A549 (cell line): ENCODE measurements at regions of chr9 and their contacts with region 1.

Region 1: GRCh38 chr9:33076358-33077004 is at the start of gene SMU1:
- DNase-seq: peak; percentile 96 to 99
- ATAC-seq: peak; percentile 97 to 99
- H3K4me3 ChIP-seq: peak within 1 kb of the TSS; percentile 71
- H3K27ac ChIP-seq: peak within 1 kb of the TSS; percentile 82 to 93
- H3K4me1 ChIP-seq: peaks cover 14% of the 10 kb centered on the region; the same call in 2 of the 3 replicates
- CTCF ChIP-seq: no peak
- EP300 ChIP-seq: no peak
- POLR2A ChIP-seq: peak; percentile 70
- RAD21 ChIP-seq: no peak
- polyA plus RNA-seq, gene SMU1: 25.3 and 26.0 TPM in 2 replicates

Region 2: DNA sequence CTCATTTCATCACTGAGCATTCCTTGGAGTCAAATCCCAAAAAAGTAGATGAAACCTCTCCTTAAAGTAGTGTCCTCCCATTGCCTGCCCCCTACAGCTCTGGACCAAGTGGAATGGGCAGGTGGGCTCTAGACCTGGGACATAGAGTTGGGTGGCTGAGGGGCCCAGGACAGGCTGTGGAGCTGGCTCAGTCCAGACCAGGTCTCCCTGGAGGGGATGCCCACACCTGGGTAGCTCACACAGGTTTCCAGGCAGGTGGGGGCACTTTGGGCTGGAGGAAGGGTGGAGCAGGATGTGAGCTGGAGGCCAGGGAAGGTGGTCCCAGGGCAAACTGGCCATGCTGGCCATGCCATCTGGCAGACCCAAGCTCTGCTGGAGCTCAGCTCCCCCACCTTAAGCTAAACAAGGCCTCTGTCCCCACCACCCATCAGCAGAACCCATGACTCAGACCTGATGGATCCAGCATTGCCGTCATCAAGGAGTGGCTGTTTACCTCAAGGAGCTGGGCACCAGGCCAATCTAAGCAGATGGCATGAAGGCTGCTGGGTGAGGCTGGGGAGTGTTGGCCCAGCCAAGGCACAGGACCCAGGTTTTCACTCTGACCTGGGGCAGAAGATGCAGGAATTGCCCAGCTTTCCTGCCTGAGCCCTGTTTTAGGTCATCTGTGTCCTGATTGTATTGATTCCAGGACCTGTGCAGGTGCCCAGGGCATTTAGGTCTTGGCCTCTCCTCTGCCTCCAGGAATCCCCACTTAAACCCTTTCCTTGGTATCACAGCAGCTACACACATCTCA is 157.4 kb after region 1 on chr9:
- CTCF ChIA-PET with region 1: interaction called, 127 read pairs
- POLR2A ChIA-PET with region 1: interaction called, 4 read pairs
- DNase-seq: peak; percentile 97 to 100
- ATAC-seq: peak; percentile 86
- H3K4me3 ChIP-seq: no peak overlapping the region
- H3K27ac ChIP-seq: peak overlapping the region; percentile 96 to 99
- H3K4me1 ChIP-seq: peaks cover 61% of the 10 kb centered on the region
- CTCF ChIP-seq: no peak
- EP300 ChIP-seq: peak; percentile 92 to 95; a peak in 4 of 5 replicates
- POLR2A ChIP-seq: peak; percentile 37; the same call in 1 of the 2 replicates
- RAD21 ChIP-seq: peak; percentile 32 to 53; a peak in 4 of 5 replicates